ENCODE measurements at regions of chr9 and their contacts with region 1.

Region 1: GRCh38 chr9:70258692-70259511 is at the start of gene SMC5:
- ATAC-seq: peak; percentile 87 to 94 (median 92)
- H3K4me3 ChIP-seq: peak within 1 kb of the TSS; percentile 72 to 92 (median 73)
- H3K27ac ChIP-seq: peak within 1 kb of the TSS; percentile 81 to 92
- H3K4me1 ChIP-seq: peaks cover 37 to 47% of the 10 kb centered on the region in 2 donors
- total RNA-seq, gene SMC5: 15.5 to 36.9 (median 23.4) TPM

Region 2: GRCh38 chr9:70352802-70353201 is 93.9 kb after region 1 on chr9:
- in situ Hi-C with region 1: loop called in 1 of 9 experiments (anchors 25 kb)
- ATAC-seq: no peak
- H3K4me3 ChIP-seq: no peak overlapping the region
- H3K27ac ChIP-seq: no peak overlapping the region
- H3K4me1 ChIP-seq: no peaks in the 10 kb centered on the region